Activated CD4-positive, alpha-beta T cell treated with anti-CD3 and anti-CD28 coated beads, Interleukin-2, amount 10 ng/mL, durations not matched to agents 24 days and 14 days (primary cell): ENCODE measurements at regions of chr3 and their contacts with region 1.

Region 1: DNA sequence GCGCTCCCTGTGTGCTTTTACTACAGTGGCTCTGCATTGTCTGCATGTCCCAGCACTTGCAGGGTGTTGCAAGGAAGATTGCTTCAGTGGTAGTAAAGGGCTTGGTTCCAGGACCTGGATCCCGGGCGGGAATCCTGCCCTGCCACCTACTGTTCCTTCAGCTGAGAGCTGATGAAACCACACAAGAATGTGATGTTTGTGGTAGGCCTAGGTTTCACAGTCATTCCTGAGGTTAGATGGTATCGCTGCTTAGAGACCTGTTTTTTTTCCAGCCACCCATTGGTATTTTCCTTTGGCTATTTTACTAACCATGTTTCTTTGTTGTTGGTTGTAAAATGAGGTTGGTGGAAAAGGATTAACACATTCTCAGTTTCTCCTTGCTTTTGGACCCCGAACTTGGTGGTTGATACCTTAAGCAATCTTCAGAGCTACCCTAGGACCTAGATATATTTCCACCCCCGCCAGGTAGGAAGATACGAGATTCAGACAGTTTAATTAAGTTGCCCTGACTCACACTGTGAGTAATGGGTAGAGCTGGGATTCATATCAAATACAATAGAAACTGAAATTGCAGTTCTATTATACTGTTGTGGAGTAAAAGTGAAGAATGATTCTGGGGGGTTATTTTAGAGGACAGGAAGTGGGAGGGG is 11.4 kb downstream of the GPR87 start:
- DNase-seq: peak; percentile 65
- H3K4me3 Mint-ChIP-seq: peak overlapping the region; percentile 13
- H3K27ac Mint-ChIP-seq: peak overlapping the region; percentile 80
- H3K4me1 Mint-ChIP-seq: peaks cover 50% of the 10 kb centered on the region
- H3K27me3 Mint-ChIP-seq: peaks cover 2% of the 10 kb centered on the region

Region 2: GRCh38 chr3:150384296-150385212 is 920.7 kb before region 1 on chr3:
- intact Hi-C with region 1: loop called (anchors 10 kb)
- DNase-seq: peak; percentile 84
- H3K4me3 Mint-ChIP-seq: peak overlapping the region; percentile 68
- H3K27ac Mint-ChIP-seq: peak overlapping the region; percentile 77
- H3K4me1 Mint-ChIP-seq: peaks cover 25% of the 10 kb centered on the region
- H3K27me3 Mint-ChIP-seq: no peaks in the 10 kb centered on the region

Region 3: GRCh38 chr3:150787741-150788370 is 517.4 kb before region 1 on chr3:
- intact Hi-C with region 1: loop called (anchors 5 kb)
- DNase-seq: peak; percentile 92
- H3K4me3 Mint-ChIP-seq: peak overlapping the region; percentile 2
- H3K27ac Mint-ChIP-seq: peak overlapping the region; percentile 39
- H3K4me1 Mint-ChIP-seq: peaks cover 39% of the 10 kb centered on the region
- H3K27me3 Mint-ChIP-seq: peaks cover 4% of the 10 kb centered on the region

Region 4: DNA sequence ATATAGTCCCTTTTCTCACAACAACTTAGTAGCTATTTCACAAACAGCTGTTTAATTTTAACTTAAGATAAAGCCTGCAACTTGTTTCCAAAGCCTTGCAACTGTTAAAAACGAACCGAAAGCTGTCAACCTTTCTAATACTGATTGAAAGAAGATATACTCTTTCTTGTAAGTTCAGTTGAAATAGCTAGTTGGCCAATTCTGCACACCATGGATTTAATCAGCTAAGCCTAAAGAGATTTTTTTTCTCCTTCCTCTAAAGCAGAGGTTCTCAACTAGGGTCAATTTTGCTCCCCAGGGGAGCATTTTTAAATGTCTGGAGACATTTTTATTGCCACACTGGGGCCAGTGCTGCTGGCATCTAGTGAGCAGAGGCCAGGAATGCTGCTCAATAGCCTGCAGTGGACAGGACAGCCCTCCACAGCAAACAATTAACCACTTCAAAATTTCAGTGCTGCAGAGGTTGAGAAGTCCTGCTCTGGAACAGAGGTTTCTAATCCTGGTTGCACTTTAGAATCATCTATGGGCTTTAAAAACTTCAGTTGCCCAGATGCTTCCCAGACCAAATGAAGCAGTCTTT is 426.1 kb before region 1 on chr3:
- intact Hi-C with region 1: no loop called
- DNase-seq: no peak
- H3K4me3 Mint-ChIP-seq: no peak overlapping the region
- H3K27ac Mint-ChIP-seq: no peak overlapping the region
- H3K4me1 Mint-ChIP-seq: no peaks in the 10 kb centered on the region
- H3K27me3 Mint-ChIP-seq: peaks cover 20% of the 10 kb centered on the region

Region 5: GRCh38 chr3:151191095-151191494 is 114.1 kb before region 1 on chr3:
- intact Hi-C with region 1: no loop called
- DNase-seq: no peak
- H3K4me3 Mint-ChIP-seq: peak overlapping the region; percentile 63
- H3K27ac Mint-ChIP-seq: peak overlapping the region; percentile 89
- H3K4me1 Mint-ChIP-seq: peaks cover 42% of the 10 kb centered on the region
- H3K27me3 Mint-ChIP-seq: no peaks in the 10 kb centered on the region

Region 6: GRCh38 chr3:151268267-151269235 is 36.7 kb before region 1 on chr3:
- intact Hi-C with region 1: loop called (anchors 1 kb)
- DNase-seq: peak; percentile 89
- H3K4me3 Mint-ChIP-seq: peak overlapping the region; percentile 72
- H3K27ac Mint-ChIP-seq: peak overlapping the region; percentile 91
- H3K4me1 Mint-ChIP-seq: peaks cover 38% of the 10 kb centered on the region
- H3K27me3 Mint-ChIP-seq: peaks cover 2% of the 10 kb centered on the region

Region 7: GRCh38 chr3:151282921-151283320 is 22.3 kb before region 1 on chr3:
- intact Hi-C with region 1: loop called (anchors 1 kb)
- DNase-seq: peak; percentile 70
- H3K4me3 Mint-ChIP-seq: no peak overlapping the region
- H3K27ac Mint-ChIP-seq: peak overlapping the region; percentile 81
- H3K4me1 Mint-ChIP-seq: peaks cover 50% of the 10 kb centered on the region
- H3K27me3 Mint-ChIP-seq: no peaks in the 10 kb centered on the region

Region 8: DNA sequence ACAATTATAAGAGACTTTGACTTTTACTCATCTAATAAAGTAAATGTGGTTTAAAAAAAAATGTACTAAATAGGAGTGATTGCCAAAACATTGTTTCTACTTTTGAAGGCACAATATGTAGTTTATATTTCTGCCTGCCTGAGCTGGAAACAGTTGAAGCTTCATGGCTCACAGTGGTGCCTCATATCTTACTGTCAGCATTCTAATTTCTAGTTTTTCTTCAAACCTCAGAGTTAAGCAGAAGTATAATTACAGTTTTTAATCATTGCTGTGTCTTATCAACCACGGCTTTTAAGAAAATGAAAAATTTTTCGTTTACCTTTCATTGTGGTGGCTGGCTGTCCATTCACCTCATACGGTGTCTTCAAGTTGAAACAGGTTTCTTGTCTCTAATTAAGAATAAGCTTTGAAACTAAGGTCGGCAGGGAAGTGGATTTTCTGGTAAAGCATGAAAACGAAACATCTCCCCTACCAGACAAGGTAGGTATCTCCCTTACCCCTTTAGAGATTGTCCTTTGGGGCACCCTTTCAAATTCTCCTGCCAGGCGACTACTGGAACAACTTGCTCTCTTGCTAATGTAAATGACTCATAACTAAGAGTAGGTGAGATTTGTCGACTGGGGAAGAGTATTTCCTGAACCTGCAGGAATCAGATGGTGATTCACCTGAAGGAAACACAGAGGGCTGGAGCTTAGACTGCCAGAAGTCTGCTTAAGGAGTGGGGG is 11.2 kb after region 1 on chr3 and contains the start of gene GPR87:
- intact Hi-C with region 1: loop called (anchors 1 kb)
- DNase-seq: peak; percentile 61
- H3K4me3 Mint-ChIP-seq: peak within 1 kb of the TSS; percentile 30
- H3K27ac Mint-ChIP-seq: peak within 1 kb of the TSS; percentile 60
- H3K4me1 Mint-ChIP-seq: peaks cover 18% of the 10 kb centered on the region
- H3K27me3 Mint-ChIP-seq: peaks cover 6% of the 10 kb centered on the region
- total RNA-seq, gene GPR87: 1.0 and 1.4 TPM in 2 replicates